ENCODE measurements at regions of chr11 and their contacts with region 1.

Region 1: DNA sequence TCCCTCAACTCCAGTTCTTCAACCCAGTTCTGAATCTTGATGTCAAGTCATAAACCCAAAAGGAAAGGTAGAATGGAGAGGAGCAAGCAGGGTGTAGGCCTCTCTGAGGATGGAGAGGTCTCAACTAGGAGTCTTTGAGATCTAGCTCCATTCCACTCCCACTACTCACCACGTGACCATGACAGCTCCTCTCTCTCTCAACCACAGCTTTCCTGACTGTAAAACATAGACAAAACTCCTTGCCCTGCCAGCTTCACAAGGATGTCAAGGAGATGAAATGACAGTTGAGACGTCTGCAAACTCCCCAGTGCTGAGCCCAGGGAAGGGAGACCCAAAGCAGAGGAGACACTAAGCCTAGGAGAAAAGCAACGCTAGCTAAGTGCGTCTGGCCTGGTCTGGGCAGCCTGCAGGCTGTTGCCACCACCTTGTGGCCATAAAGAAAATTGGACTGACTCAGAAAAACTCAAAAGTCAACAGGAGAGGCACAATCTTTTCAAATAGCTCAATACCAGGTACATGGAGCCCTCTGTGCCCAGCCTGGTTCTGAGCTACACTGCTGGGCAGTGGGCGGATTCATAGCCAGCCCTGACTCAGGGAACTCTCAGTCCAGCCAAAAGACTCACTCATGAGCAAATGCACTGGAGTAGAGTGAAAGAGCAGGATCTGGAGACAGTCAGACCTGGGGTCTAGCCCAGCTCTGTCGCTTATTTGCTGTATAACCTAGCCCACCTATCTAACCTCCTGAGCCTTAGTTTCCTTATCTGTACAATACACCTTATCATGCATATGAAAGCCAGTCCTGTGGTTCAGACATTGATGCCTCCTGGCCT is 3.4 kb downstream of the CLPB start:
- DNase-seq: peak; percentile 18
- H3K4me3 ChIP-seq: no peak overlapping the region
- H3K27ac ChIP-seq: no peak overlapping the region
- H3K27me3 ChIP-seq: no peaks in the 10 kb centered on the region
- CTCF ChIP-seq: peak; percentile 86

Region 2: GRCh38 chr11:72015511-72016171 is 415.3 kb before region 1 on chr11:
- CTCF ChIA-PET with region 1: interaction called, 10 read pairs
- POLR2A ChIA-PET with region 1: no interaction called
- DNase-seq: no peak
- H3K4me3 ChIP-seq: no peak overlapping the region
- H3K27ac ChIP-seq: no peak overlapping the region
- H3K27me3 ChIP-seq: no peaks in the 10 kb centered on the region
- CTCF ChIP-seq: peak; percentile 48

Region 3: DNA sequence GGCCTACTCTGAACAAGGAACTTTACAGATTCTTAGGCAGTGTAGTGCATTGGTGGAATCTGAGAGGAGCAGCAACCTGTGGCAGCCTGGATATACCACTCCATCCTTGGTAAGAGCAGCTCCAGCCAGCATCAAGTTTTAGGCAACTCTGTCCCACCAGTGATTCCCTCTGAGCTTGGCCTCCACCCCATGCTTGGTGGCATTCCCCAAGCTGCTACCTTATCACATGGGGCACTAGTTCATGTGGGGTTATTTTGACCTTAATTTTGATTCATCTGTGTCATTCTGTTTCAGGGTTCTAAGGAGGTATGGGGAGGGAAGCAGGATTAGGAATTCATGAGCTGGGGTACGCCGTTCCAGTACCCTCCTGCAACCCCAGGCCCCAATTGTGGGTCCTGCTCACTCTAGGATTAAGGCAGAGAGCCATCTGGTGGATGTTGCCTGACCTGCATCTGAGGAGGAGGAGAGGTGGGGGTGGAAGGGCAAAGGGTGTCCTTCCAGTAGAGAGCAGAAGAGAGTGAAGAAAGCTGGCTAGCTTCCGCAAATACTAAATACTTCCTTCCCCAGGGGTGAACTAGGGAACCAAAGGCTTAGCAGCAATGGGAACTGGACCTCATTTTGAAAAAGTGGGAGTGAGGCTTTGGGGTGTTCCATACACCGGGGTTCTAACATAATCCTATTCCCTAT is 339.8 kb before region 1 on chr11:
- CTCF ChIA-PET with region 1: interaction called, 25 read pairs
- POLR2A ChIA-PET with region 1: no interaction called
- DNase-seq: peak; percentile 20
- H3K4me3 ChIP-seq: no peak overlapping the region
- H3K27ac ChIP-seq: no peak overlapping the region
- H3K27me3 ChIP-seq: no peaks in the 10 kb centered on the region
- CTCF ChIP-seq: peak; percentile 90

Region 4: GRCh38 chr11:72222907-72223614 is 207.9 kb before region 1 on chr11:
- CTCF ChIA-PET with region 1: interaction called, 10 read pairs
- POLR2A ChIA-PET with region 1: interaction called, 8 read pairs
- DNase-seq: peak; percentile 76
- H3K4me3 ChIP-seq: peak overlapping the region; percentile 83
- H3K27ac ChIP-seq: peak overlapping the region; percentile 65
- H3K27me3 ChIP-seq: peaks cover 7% of the 10 kb centered on the region
- CTCF ChIP-seq: peak; percentile 32; the same call in 1 of the 2 replicates

Region 5: DNA sequence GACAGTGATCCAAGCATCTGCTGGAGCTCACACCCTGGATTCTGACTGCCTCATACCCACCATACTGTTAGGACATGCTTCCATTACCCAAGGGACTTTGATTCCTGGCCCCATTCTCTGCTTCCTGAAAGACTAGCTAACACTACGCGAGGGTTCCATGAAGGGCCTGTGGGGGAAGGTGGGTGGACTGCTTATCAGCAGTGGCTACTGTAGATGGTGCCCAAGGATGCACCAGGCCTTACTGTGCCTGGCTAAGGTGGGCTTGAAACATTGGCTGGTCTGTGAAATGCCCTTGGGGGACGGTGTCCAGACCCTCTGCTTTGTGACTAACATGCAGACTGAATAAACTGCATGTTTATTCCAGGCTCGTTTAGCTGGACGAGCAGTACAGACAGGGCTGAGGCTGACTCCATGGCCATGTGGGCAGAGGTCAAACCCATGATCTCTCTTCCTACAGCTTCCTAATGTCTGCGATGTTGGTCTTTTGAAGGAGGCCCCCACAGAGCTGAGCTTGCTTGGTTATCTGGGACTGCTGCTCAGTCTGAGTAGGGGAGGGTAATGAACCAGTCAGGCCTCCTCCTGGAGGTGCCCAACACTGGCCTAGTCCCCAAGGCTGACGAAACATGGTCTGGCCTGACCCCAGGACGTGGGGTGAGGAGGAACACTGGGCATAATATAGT is 138.7 kb before region 1 on chr11:
- CTCF ChIA-PET with region 1: interaction called, 36 read pairs
- POLR2A ChIA-PET with region 1: no interaction called
- DNase-seq: no peak
- H3K4me3 ChIP-seq: no peak overlapping the region
- H3K27ac ChIP-seq: no peak overlapping the region
- H3K27me3 ChIP-seq: no peaks in the 10 kb centered on the region
- CTCF ChIP-seq: no peak

Region 6: GRCh38 chr11:72446902-72447769 is 16.2 kb after region 1 on chr11:
- CTCF ChIA-PET with region 1: interaction called, 49 read pairs
- POLR2A ChIA-PET with region 1: no interaction called
- DNase-seq: peak; percentile 24
- H3K4me3 ChIP-seq: no peak overlapping the region
- H3K27ac ChIP-seq: no peak overlapping the region
- H3K27me3 ChIP-seq: peaks cover 7% of the 10 kb centered on the region
- CTCF ChIP-seq: peak; percentile 82